HCT116 (cell line): ENCODE measurements at regions of chr1 and their contacts with region 1.

Region 1: DNA sequence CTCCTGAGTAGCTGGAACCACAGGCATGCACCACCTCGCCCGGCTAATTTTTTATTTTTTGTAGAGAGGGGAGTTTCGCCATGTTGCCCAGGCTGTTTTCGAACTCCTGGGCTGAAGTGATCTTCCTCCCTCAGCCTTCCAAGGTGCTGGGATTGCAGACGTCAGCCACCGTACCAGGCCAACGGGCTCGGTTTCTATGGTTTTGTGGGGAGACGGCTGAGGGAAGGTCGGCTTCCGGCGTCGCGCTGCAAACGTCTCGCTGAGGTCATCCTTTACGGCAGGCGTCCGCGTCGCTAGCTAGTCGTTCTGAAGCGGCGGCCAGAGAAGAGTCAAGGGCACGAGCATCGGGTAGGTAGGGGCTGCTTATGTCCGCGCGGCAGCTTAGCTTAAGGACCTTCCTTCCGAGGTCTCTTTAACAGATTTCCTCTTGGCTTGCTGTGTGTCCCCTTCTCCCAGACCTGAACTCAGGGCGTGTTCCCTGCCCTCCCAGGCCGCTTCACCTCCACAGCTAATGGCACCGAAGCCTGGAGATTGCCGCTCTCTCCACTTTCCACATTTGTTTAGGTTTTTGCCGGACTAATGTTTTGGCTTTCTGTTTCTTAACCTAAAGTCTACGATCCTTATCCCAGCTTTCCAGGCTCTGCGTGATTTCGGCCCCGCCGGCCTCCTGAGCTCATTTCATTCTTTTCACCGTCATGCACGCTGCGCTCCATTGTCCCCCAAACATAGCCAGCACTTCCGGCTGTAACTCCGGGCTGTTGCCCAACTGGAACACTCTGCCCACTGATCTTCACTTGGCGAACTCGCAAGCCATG is at the start of gene NDUFS5:
- DNase-seq: peak; percentile 84
- ATAC-seq: peak; percentile 88
- H3K4me3 ChIP-seq: peak within 1 kb of the TSS; percentile 84 to 98
- H3K27ac ChIP-seq: peak within 1 kb of the TSS; percentile 75
- H3K4me1 ChIP-seq: peaks cover 7 to 17% of the 10 kb centered on the region in 2 experiments; a peak in 3 of 4 replicates
- H3K27me3 ChIP-seq: no peaks in the 10 kb centered on the region
- CTCF ChIP-seq: no peak
- POLR2A ChIP-seq: no peak
- RAD21 ChIP-seq: no peak
- total RNA-seq, gene NDUFS5: 263 TPM

Region 2: GRCh38 chr1:38885092-38885491 is 141.2 kb before region 1 on chr1:
- CTCF ChIA-PET with region 1: no interaction called
- POLR2A ChIA-PET with region 1: no interaction called
- RAD21 ChIA-PET with region 1: interaction called in 1 of 2 experiments, 10 read pairs
- intact Hi-C with region 1: no loop called
- DNase-seq: no peak
- ATAC-seq: no peak
- H3K4me3 ChIP-seq: no peak overlapping the region
- H3K27ac ChIP-seq: no peak overlapping the region
- H3K4me1 ChIP-seq: no peaks in the 10 kb centered on the region
- H3K27me3 ChIP-seq: 0 out of 2 replicates have a peak, but pooled peaks cover 6% of the 10 kb centered on the region
- CTCF ChIP-seq: no peak
- POLR2A ChIP-seq: no peak
- RAD21 ChIP-seq: no peak

Region 3: DNA sequence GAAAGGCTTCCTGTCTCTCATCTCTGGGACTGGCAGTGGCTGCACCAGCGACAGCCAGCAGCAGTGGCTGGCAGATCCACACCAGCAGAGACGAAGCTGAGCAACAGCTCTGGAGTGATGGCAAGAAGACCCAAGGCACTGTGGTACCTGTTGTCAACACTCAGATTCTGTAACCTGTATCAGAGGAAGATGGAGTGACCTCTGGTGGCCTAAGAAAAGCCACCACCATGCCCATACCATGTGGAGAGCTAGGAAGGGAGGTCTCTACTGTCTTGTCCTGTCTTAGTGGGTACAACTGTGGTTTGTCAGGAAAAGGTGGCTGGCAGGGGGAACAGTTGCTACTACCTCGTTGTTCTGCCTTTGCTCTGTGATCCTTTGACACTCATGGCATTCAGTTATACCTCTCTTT is 62.1 kb before region 1 on chr1:
- CTCF ChIA-PET with region 1: interaction called, 3 read pairs
- POLR2A ChIA-PET with region 1: interaction called, 7 read pairs
- RAD21 ChIA-PET with region 1: interaction called in 1 of 2 experiments, 3 read pairs
- intact Hi-C with region 1: loop called (anchors 5 kb)
- DNase-seq: no peak
- ATAC-seq: peak; percentile 54
- H3K4me3 ChIP-seq: no peak overlapping the region
- H3K27ac ChIP-seq: no peak overlapping the region
- H3K4me1 ChIP-seq: peaks cover 20 to 45% of the 10 kb centered on the region in 2 experiments
- H3K27me3 ChIP-seq: no peaks in the 10 kb centered on the region
- CTCF ChIP-seq: peak; percentile 22 to 54 (median 53); a peak in 5 of 6 replicates
- POLR2A ChIP-seq: no peak
- RAD21 ChIP-seq: peak; percentile 59